Activated T-helper 1 cell treated with anti-CD3 and anti-CD28 coated beads, Interleukin-12 subunit alpha, Interleukin-12 subunit beta, Interleukin-2, Interleukin-4 antibody, amounts not matched to agents 30 ng/mL and 10 ng/mL and 1 ng/mL, durations not matched to agents 14 hours and 24 hours and 36 hours (primary cell): ENCODE measurements at regions of chr9 and their contacts with region 1.

Region 1: GRCh38 chr9:18857769-18858168 is 175.2 kb downstream of the SAXO1 start:
- DNase-seq: no peak
- H3K4me3 Mint-ChIP-seq: no peak overlapping the region
- H3K27ac Mint-ChIP-seq: no peak overlapping the region
- H3K4me1 Mint-ChIP-seq: no peaks in the 10 kb centered on the region
- H3K27me3 Mint-ChIP-seq: peaks cover 14% of the 10 kb centered on the region

Region 2: GRCh38 chr9:18536554-18536953 is 321.2 kb before region 1 on chr9:
- intact Hi-C with region 1: no loop called
- DNase-seq: no peak
- H3K4me3 Mint-ChIP-seq: no peak overlapping the region
- H3K27ac Mint-ChIP-seq: no peak overlapping the region
- H3K4me1 Mint-ChIP-seq: no peaks in the 10 kb centered on the region
- H3K27me3 Mint-ChIP-seq: no peaks in the 10 kb centered on the region

Region 3: DNA sequence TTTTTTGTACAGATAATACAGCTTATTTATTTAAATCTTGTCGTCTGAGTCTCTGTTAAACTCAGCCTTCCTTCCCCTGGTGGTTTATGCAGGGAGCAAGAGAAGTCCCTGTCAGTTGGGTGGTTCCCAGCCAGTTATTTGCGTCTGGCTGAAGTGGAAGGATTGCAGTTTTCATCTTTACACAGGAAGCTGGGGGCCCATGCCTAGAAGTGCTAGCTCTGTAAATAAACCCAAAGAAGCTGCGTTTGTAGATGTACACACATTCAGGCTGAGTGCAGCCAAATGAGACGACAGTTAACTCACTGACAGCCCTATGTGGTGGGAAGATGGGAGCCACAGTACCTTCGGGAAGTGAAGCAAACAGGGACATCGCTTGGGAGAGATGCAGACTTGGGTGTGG is 53.1 kb after region 1 on chr9:
- intact Hi-C with region 1: loop called (anchors 10 kb)
- DNase-seq: no peak
- H3K4me3 Mint-ChIP-seq: no peak overlapping the region
- H3K27ac Mint-ChIP-seq: no peak overlapping the region
- H3K4me1 Mint-ChIP-seq: no peaks in the 10 kb centered on the region
- H3K27me3 Mint-ChIP-seq: peaks cover 17% of the 10 kb centered on the region